ENCODE measurements at regions of chr1 and their contacts with region 1.

Region 1: DNA sequence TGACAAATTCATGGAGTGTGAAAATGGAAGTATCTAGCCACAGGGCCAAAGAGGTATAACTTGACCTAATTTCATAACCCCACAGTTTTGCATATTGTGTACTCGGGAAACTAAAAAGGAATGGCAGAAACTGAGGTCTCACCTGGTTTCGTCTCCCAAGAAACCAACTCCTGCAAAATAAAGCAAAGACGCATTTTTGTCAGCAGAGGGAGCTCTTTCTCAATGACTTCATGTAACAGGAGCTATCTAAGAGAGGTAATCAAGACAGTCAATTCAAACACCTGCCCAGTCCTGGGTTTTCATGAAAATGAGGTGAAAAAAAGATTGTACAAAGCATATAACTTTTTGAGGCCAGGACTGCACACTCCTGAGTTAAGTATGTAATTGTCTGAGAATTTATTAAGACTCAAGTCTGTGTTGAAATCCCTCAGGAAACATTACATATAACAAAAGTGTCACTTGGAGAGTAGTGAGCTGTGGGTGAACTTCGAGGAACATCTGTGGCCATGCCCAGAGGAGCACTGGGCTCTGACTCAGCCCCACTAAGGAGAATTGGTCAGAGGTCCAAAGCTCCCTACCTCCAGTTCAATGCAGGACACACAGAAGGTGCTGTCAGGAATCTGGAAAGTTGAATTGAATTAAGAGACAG is 17.6 kb downstream of the FCRL4 start:
- DNase-seq: peak; percentile 85
- H3K4me3 Mint-ChIP-seq: no peak overlapping the region
- H3K27ac Mint-ChIP-seq: no peak overlapping the region
- H3K4me1 Mint-ChIP-seq: no peaks in the 10 kb centered on the region
- H3K27me3 Mint-ChIP-seq: peaks cover 62% of the 10 kb centered on the region
- CTCF ChIP-seq: peak; percentile 82

Region 2: DNA sequence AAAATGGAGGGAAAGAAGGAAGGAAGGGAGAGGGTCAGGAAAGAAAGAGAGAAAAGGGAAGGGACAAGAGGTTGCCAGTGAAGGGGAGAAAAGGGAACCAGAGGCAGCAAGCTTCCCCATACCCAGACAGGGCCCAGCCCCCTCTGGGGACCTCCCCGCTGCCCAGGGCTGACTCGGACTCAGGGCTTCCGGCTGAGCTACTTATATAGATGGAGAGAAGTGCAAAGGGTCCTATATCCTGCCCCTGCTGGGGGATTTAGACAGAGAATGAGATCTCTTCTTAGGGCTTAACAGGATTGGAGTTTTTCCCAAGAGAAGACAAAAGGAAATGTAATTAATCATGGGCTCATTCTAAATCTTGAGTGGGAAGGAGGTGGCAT is 480.7 kb before region 1 on chr1 and contains the start of gene ETV3L:
- CTCF ChIA-PET with region 1: no interaction called
- POLR2A ChIA-PET with region 1: no interaction called
- intact Hi-C with region 1: no loop called
- DNase-seq: no peak
- H3K4me3 Mint-ChIP-seq: no peak within 1 kb of the TSS
- H3K27ac Mint-ChIP-seq: no peak within 1 kb of the TSS
- H3K4me1 Mint-ChIP-seq: no peaks in the 10 kb centered on the region
- H3K27me3 Mint-ChIP-seq: peaks cover 27% of the 10 kb centered on the region
- CTCF ChIP-seq: no peak
- total RNA-seq, gene ETV3L: not detected in 2 replicates

Region 3: DNA sequence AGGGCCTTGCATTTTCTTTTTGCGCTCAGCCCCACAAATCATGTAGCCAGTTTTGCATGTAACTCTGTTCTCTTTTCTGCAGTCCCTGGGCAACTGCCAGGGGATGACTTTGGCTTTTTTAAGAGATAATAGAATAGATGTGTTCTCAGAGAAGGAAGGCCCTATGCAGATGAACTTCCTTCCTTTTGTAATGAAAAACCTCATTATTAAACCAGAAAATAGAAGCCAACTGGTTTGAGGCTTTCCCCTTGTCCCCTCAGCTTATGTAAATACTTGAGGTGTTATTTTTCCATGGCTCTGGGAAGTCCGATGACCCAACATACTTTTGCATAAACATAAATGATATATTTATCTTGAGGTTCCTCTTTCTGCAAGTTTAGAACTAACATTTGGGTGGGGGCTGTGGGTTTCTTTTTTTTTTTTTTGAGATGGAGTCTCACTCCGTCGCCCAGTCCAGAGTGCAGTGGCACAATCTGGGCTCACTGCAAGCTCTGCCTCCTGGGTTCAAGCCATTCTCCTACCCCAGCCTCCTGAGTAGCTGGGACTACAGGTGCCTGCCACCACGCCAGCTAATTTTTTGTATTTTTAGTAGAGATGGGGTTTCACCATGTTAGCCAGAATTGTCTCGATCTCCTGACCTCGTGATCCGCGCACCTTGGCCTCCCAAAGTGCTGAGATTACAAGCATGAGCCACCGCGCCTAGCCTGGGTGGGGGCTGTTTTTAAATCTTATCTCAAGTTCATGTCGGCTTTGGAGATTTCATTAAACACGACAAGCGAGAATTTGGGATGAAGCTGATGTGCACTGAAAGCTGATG is 13.6 kb before region 1 on chr1:
- CTCF ChIA-PET with region 1: interaction called, 105 read pairs
- POLR2A ChIA-PET with region 1: no interaction called
- intact Hi-C with region 1: no loop called
- DNase-seq: no peak
- H3K4me3 Mint-ChIP-seq: no peak overlapping the region
- H3K27ac Mint-ChIP-seq: no peak overlapping the region
- H3K4me1 Mint-ChIP-seq: no peaks in the 10 kb centered on the region
- H3K27me3 Mint-ChIP-seq: peaks cover 68% of the 10 kb centered on the region
- CTCF ChIP-seq: no peak

Region 4: GRCh38 chr1:157595356-157595755 is 15.1 kb after region 1 on chr1:
- CTCF ChIA-PET with region 1: interaction called, 49 read pairs
- POLR2A ChIA-PET with region 1: interaction called, 3 read pairs
- intact Hi-C with region 1: no loop called
- DNase-seq: no peak
- H3K4me3 Mint-ChIP-seq: no peak overlapping the region
- H3K27ac Mint-ChIP-seq: no peak overlapping the region
- H3K4me1 Mint-ChIP-seq: no peaks in the 10 kb centered on the region
- H3K27me3 Mint-ChIP-seq: peaks cover 56% of the 10 kb centered on the region
- CTCF ChIP-seq: no peak

Region 5: GRCh38 chr1:157671895-157672294 is 91.6 kb after region 1 on chr1:
- CTCF ChIA-PET with region 1: interaction called, 11 read pairs
- POLR2A ChIA-PET with region 1: no interaction called
- intact Hi-C with region 1: no loop called
- DNase-seq: peak; percentile 46
- H3K4me3 Mint-ChIP-seq: no peak overlapping the region
- H3K27ac Mint-ChIP-seq: no peak overlapping the region
- H3K4me1 Mint-ChIP-seq: no peaks in the 10 kb centered on the region
- H3K27me3 Mint-ChIP-seq: peaks cover 15% of the 10 kb centered on the region
- CTCF ChIP-seq: no peak

Region 6: GRCh38 chr1:157682710-157683437 is 102.6 kb after region 1 on chr1:
- CTCF ChIA-PET with region 1: interaction called, 142 read pairs
- POLR2A ChIA-PET with region 1: no interaction called
- intact Hi-C with region 1: no loop called
- DNase-seq: no peak
- H3K4me3 Mint-ChIP-seq: no peak overlapping the region
- H3K27ac Mint-ChIP-seq: no peak overlapping the region
- H3K4me1 Mint-ChIP-seq: peaks cover 6% of the 10 kb centered on the region
- H3K27me3 Mint-ChIP-seq: peaks cover 49% of the 10 kb centered on the region
- CTCF ChIP-seq: no peak

Region 7: GRCh38 chr1:157697781-157698569 is 117.7 kb after region 1 on chr1:
- CTCF ChIA-PET with region 1: interaction called, 142 read pairs
- POLR2A ChIA-PET with region 1: no interaction called
- intact Hi-C with region 1: no loop called
- DNase-seq: no peak
- H3K4me3 Mint-ChIP-seq: no peak overlapping the region
- H3K27ac Mint-ChIP-seq: no peak overlapping the region
- H3K4me1 Mint-ChIP-seq: no peaks in the 10 kb centered on the region
- H3K27me3 Mint-ChIP-seq: peaks cover 88% of the 10 kb centered on the region
- CTCF ChIP-seq: no peak